ENCODE measurements at regions of chr15 and their contacts with region 1.

Region 1: DNA sequence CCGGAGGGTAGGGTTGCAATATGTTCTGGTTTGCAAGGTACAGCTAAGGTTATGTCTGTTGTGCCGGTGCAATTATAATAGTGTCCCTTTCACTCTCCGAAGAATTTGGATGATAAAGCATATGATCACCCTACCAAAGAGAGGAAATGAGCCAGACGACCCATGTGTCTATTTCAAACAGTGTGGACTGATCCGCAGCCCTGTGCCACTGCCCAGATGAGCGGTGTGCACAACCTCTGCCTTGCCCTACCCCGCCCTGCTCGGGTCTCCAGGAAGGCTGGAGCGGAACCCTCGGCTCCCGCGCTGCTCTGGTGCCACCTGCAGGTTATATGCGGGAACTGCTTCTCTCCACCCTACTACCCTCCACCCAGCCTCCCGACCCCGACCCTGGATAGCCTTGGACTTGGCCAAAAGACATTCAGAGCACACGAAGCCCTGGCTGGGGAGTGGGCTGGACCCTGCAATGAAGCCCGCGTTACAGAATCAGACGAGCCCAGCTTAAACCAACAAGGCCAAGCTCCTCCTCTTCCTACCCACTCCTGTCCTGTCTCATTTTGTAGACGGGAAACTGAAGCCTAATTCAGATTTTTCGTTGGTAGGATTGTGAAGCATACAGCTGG is 68.4 kb upstream of the CHRNB4 start:
- DNase-seq: peak; percentile 70 to 84 (median 84)
- ATAC-seq: peak; percentile 94 to 95
- H3K4me3 ChIP-seq: no peak overlapping the region
- H3K27ac ChIP-seq: no peak overlapping the region
- H3K4me1 ChIP-seq: no peaks in the 10 kb centered on the region
- H3K27me3 ChIP-seq: no peaks in the 10 kb centered on the region

Region 2: GRCh38 chr15:78552597-78552996 is 156.8 kb before region 1 on chr15:
- intact Hi-C with region 1: no loop called
- DNase-seq: no peak
- ATAC-seq: no peak
- H3K4me3 ChIP-seq: no peak overlapping the region
- H3K27ac ChIP-seq: no peak overlapping the region
- H3K4me1 ChIP-seq: no peaks in the 10 kb centered on the region
- H3K27me3 ChIP-seq: no peaks in the 10 kb centered on the region

Region 3: GRCh38 chr15:78618490-78618934 is 90.9 kb before region 1 on chr15:
- intact Hi-C with region 1: loop called (anchors 2 to 5 kb)
- DNase-seq: peak; percentile 84 to 90 (median 85)
- ATAC-seq: peak; percentile 64 to 78
- H3K4me3 ChIP-seq: no peak overlapping the region
- H3K27ac ChIP-seq: no peak overlapping the region
- H3K4me1 ChIP-seq: no peaks in the 10 kb centered on the region
- H3K27me3 ChIP-seq: no peaks in the 10 kb centered on the region

Region 4: GRCh38 chr15:78640840-78641719 is 68.3 kb before region 1 on chr15 and contains the start of gene CHRNB4:
- intact Hi-C with region 1: loop called in 1 of 4 experiments (anchors 5 kb)
- DNase-seq: peak in 1 of 3 donors; percentile 59
- ATAC-seq: peak; percentile 52 to 61
- H3K4me3 ChIP-seq: peak within 1 kb of the TSS; percentile 18
- H3K27ac ChIP-seq: no peak within 1 kb of the TSS
- H3K4me1 ChIP-seq: no peaks in the 10 kb centered on the region
- H3K27me3 ChIP-seq: no peaks in the 10 kb centered on the region
- total RNA-seq, gene CHRNB4: not detected